Mammary epithelial cell (primary cell): ENCODE measurements at regions of chr7 and their contacts with region 1.

Region 1: DNA sequence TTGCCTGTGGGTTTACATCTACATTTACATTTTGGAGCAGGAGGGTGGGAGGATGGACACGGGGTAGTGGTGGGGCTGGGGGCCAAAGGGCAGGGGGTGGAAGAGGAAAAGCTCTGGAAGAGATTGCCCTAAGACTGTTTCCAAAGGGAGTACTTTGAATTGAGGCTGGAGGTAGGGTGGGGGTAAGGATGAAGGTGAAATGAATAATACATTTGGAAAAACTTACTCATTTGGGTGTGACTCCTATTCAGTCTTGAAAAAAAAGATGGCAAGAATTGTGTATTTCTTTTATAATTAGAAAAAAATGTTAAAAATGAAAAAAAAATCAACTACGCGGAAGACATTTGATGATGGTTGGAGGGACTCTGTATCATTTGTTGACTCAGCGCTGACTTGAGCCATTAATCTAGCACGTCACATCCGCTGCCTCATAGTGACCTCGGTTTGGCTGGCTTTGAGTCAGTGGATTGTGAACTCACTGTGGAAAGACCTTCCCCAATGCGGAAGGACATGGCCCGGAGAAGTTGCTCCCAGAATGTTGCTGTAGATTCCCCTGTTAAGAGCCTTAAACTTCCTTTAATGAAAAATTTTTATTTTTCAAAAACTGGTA is 2.8 kb downstream of the FAM180A start:
- DNase-seq: peak; percentile 61
- H3K4me3 ChIP-seq: no peak overlapping the region
- H3K27ac ChIP-seq: peak overlapping the region; percentile 72
- H3K4me1 ChIP-seq: peaks cover 33% of the 10 kb centered on the region
- H3K27me3 ChIP-seq: no peaks in the 10 kb centered on the region
- CTCF ChIP-seq: no peak

Region 2: GRCh38 chr7:135690566-135690965 is 55.2 kb before region 1 on chr7:
- CTCF ChIA-PET with region 1: no interaction called
- dilution Hi-C with region 1: loop called (anchors 5 kb)
- in situ Hi-C with region 1: no loop called
- intact Hi-C with region 1: no loop called
- DNase-seq: no peak
- H3K4me3 ChIP-seq: no peak overlapping the region
- H3K27ac ChIP-seq: no peak overlapping the region
- H3K4me1 ChIP-seq: no peaks in the 10 kb centered on the region
- H3K27me3 ChIP-seq: no peaks in the 10 kb centered on the region
- CTCF ChIP-seq: no peak

Region 3: DNA sequence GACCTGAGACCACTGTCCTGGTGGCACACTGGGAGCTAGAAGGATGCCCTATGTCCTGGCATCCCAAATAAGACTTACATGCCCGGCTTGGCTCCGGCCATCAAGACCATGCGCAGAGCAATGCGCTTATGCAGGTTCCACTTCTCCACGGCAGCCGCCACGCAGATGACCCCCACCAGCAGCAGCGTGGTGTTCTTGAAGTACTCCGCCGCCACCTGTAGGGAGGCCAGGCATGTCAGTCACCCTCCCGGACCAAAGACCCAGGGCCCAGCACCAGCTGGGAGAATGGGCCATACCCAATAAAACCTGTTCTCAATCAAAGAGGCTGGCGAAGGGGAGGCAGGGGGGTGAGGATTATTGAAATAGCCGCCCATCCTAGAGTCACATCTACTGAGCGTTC is 37.8 kb before region 1 on chr7:
- CTCF ChIA-PET with region 1: no interaction called
- dilution Hi-C with region 1: no loop called
- in situ Hi-C with region 1: no loop called
- intact Hi-C with region 1: loop called (anchors 5 kb)
- DNase-seq: no peak
- H3K4me3 ChIP-seq: no peak overlapping the region
- H3K27ac ChIP-seq: no peak overlapping the region
- H3K4me1 ChIP-seq: peaks cover 27% of the 10 kb centered on the region
- H3K27me3 ChIP-seq: no peaks in the 10 kb centered on the region
- CTCF ChIP-seq: no peak